ENCODE measurements at regions of chr17 and their contacts with region 1.

Region 1: DNA sequence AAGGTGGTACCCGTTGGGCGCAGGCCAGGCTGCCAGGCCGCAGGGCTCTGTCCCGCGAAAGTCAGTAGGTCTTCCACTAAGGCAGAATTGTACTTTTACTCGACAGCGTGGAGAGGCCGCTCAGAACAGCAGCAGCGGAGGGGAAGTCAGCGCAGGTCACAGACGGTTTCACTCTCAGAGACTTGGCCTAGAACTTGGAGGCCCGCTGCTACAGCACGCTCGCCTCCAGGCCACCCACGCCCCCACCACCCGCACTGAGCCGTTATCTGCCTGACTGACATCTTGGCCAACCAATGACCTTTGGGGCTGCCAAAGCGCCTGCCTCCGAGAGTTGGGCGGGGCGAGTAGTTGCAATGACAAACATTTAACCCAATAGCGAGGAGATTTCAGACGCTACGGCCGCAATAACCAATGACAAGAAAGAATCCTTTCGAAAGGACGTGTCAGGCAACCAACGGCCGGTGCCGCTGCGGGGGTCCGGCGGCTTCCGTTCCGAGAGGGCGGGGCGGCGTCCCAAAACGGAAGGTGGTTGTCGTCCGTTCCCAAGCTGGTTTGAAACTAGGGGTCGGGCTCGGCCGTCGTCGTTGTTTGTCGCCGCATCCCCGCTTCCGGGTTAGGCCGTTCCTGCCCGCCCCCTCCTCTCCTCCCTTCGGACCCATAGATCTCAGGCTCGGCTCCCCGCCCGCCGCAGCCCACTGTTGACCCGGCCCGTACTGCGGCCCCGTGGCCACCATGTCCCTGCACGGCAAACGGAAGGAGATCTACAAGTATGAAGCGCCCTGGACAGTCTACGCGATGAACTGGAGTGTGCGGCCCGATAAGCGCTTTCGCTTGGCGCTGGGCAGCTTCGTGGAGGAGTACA is at the start of gene DCAF7:
- DNase-seq: peak; percentile 100
- H3K4me3 Mint-ChIP-seq: peak within 1 kb of the TSS; percentile 85
- H3K27ac Mint-ChIP-seq: peak within 1 kb of the TSS; percentile 96
- H3K4me1 Mint-ChIP-seq: peaks cover 32% of the 10 kb centered on the region
- H3K27me3 Mint-ChIP-seq: no peaks in the 10 kb centered on the region
- total RNA-seq, gene DCAF7: 118 to 119 TPM

Region 2: DNA sequence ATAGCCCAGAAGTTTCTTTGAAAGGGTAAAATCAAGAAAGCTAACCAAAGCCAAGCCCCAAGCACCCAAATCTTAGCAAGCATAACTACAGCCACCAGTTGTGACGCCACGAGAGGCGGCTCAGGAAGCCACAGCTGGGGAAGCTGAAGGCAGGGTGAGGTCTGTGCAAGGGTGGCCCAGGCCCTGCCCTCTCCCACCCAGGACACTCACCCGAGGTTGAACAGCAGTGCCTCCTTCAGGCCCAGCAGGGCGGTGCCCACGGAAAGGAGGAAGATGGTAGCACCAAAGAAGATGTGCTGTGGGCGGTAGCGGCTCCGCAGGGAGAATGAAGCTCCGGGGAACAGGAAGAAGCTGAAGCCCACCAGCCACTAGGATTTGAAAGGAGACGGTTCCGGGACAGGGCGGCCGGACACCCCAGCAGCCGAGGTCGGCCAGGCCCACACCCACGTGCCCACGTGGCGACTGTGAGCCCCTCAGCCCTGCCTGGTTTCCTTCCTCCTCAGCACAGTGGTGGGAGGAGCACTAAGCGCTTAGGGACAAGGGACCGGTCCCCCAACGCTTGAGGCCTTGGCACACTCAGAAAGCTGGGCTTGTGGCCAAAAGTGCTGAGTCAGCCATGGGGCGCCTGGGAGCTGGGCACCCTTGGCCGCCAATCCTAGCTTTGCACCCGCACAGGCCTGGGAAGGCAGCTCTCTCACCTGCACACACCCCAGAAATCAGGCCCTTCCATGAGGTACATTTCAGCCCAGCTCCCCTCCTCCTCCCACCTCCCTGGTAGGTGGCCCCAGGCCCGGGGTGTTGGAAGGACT is 115.1 kb before region 1 on chr17:
- CTCF ChIA-PET with region 1: no interaction called
- POLR2A ChIA-PET with region 1: interaction called, 3 read pairs
- intact Hi-C with region 1: loop called (anchors 1 kb)
- DNase-seq: peak; percentile 56
- H3K4me3 Mint-ChIP-seq: no peak overlapping the region
- H3K27ac Mint-ChIP-seq: peak overlapping the region; percentile 46
- H3K4me1 Mint-ChIP-seq: peaks cover 40% of the 10 kb centered on the region
- H3K27me3 Mint-ChIP-seq: no peaks in the 10 kb centered on the region

Region 3: DNA sequence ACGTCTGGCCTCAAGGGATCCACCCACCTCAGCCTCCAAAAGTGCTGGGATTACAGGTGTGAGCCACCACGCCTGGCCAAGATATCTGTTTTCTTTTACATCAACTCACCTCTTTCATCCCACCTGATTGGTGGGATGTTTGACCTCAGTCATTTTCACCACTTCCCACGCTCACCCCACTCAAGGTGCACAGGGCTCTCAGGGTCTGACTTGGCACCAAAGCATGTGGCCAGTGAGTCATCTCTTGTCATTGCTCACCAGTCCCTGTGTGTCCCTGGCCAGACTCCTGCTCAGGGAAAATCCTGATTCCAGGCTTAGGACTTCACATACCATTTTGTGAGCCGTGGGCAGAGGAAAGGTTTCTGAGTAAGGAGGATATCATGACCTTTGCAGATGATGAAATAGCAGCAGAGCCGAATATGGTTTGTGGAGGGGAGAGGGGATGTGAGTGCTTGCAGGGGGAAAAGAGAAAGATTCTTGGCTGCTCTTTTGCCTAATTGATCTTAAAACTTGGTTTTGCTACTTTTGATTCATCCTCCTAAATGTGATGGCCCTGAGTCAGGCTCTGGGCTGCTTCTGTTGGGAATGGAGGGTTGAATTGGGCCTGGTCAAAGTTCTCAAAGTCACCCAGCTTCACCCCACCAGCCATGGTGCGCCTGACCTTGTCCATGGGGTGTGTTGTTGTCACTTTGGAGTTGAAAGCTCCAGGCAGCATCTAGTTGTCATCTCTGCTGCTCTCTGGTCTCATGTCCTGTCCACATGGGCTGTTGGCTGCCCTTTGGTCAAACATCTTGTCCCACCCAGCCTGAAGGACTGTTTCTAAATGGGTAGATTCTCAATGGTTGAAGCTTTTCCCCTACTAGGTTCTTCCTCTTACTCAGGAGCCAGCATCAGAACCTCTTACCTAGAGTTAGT is 33.0 kb before region 1 on chr17:
- CTCF ChIA-PET with region 1: no interaction called
- POLR2A ChIA-PET with region 1: interaction called, 3 read pairs
- intact Hi-C with region 1: loop called (anchors 5 kb)
- DNase-seq: peak; percentile 77
- H3K4me3 Mint-ChIP-seq: no peak overlapping the region
- H3K27ac Mint-ChIP-seq: no peak overlapping the region
- H3K4me1 Mint-ChIP-seq: peaks cover 18% of the 10 kb centered on the region
- H3K27me3 Mint-ChIP-seq: peaks cover 8% of the 10 kb centered on the region

Region 4: GRCh38 chr17:63600569-63601438 is 50.6 kb after region 1 on chr17 and contains the start of gene TACO1:
- CTCF ChIA-PET with region 1: interaction called, 4 read pairs
- POLR2A ChIA-PET with region 1: interaction called, 7 read pairs
- intact Hi-C with region 1: loop called (anchors 1 kb)
- DNase-seq: peak; percentile 88
- H3K4me3 Mint-ChIP-seq: peak within 1 kb of the TSS; percentile 86
- H3K27ac Mint-ChIP-seq: peak within 1 kb of the TSS; percentile 86
- H3K4me1 Mint-ChIP-seq: peaks cover 39% of the 10 kb centered on the region
- H3K27me3 Mint-ChIP-seq: no peaks in the 10 kb centered on the region
- total RNA-seq, gene TACO1: 28.2 to 30.4 TPM

Region 5: DNA sequence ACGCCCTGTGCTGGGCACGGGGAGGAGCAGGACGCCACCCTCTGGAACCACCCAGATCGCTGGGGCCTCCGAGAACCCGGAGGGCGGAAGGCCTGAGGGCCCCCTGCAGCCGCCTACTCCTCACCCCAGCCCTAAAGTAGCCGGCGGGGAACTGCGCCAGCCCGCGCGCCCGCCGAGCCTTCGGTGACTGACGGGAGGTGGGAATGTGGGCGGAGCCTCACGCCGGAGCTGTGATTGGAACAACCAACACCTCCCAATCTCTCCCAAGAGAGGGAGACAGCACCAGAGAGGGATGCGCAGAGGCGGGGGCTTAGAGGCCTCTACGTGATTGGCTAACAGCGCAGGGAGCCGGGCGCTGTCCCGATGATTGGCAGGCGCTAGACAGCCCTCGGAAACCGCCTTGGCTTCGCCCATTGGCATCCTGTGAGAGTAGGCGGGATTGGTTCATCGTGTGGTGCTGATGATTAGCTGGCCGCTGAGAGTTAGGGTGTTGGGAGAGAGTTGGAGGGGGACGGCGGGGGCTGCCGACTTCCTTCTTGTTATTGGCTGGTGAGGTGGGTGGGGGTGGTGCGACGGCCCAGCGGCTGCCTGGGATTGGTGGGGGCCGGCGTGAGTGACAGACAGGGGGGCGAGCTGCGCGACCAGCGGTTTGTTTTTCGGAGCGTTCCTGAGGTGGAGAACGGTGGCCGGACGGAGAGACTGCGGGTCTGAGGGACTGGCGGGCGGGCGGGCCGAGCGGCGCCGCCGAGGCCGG is 71.8 kb after region 1 on chr17 and contains the start of gene MAP3K3:
- CTCF ChIA-PET with region 1: interaction called, 4 read pairs
- POLR2A ChIA-PET with region 1: interaction called, 8 read pairs
- intact Hi-C with region 1: loop called (anchors 1 kb)
- DNase-seq: peak; percentile 99
- H3K4me3 Mint-ChIP-seq: peak within 1 kb of the TSS; percentile 99
- H3K27ac Mint-ChIP-seq: peak within 1 kb of the TSS; percentile 87
- H3K4me1 Mint-ChIP-seq: peaks cover 38% of the 10 kb centered on the region
- H3K27me3 Mint-ChIP-seq: no peaks in the 10 kb centered on the region
- total RNA-seq, gene MAP3K3: 32.8 to 34.0 TPM

Region 6: DNA sequence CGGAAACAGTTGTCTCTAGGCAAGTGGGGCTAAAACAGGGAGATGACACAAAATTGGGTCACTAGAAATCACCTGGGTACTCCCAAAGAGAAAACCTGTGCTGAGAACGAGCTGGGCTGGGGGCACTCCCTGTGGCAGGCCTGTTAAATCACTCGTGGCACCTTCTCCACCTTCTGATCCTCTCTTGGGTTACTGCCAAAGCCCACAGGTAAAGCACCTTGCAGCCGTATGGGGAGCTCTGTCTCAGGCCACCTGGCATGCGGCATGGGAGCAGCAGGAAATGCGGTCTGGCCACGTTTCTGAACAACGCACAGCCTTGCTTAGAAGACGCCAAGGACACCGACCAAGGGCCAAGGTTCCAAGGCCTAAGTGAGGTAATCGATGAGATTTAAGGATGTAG is 491.7 kb after region 1 on chr17:
- CTCF ChIA-PET with region 1: no interaction called
- POLR2A ChIA-PET with region 1: no interaction called
- intact Hi-C with region 1: no loop called
- DNase-seq: no peak
- H3K4me3 Mint-ChIP-seq: no peak overlapping the region
- H3K27ac Mint-ChIP-seq: peak overlapping the region; percentile 47
- H3K4me1 Mint-ChIP-seq: peaks cover 10% of the 10 kb centered on the region
- H3K27me3 Mint-ChIP-seq: no peaks in the 10 kb centered on the region